Mammary epithelial cell (primary cell): ENCODE measurements at regions of chr2 and their contacts with region 1.

Region 1: GRCh38 chr2:65227425-65228262 is at the start of gene ACTR2:
- DNase-seq: peak; percentile 96
- H3K4me3 ChIP-seq: peak within 1 kb of the TSS; percentile 82 to 97 (median 96)
- H3K27ac ChIP-seq: peak within 1 kb of the TSS; percentile 82
- H3K4me1 ChIP-seq: peaks cover 29% of the 10 kb centered on the region
- H3K27me3 ChIP-seq: no peaks in the 10 kb centered on the region
- CTCF ChIP-seq: no peak
- total RNA-seq, gene ACTR2: 95.0 to 291 TPM

Region 2: DNA sequence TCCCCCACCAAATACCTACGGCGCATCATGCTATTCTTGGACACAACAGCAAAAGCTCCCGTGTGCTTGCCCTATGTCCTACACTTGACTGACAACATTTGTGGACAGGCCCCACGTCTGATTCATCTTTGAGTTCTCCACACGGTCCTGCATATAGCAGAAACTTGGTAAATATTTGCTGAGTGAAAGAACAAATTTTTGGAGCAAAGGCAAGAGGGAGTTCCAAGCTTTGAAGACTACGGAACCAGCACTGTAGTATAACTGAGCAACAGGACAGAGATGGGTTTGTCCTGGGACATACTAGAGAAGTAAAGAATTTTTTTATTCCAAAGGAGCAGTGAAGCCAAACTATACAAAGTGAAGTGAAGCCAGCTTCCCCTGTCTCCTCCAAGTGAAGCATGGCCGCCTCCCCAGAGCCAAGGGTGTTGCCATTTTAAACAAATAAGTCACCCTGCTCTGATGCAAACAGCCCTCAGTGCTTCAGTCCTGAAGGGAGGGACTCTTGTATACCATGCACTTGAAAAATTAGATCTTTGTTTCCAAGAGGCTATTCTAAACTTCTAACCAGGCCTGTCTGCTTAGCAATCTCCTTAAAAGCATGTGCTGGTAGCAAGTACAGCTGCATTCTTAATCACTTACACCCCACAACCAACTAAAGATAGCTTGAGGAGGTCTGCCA is 168.8 kb after region 1 on chr2:
- CTCF ChIA-PET with region 1: interaction called, 21 read pairs
- dilution Hi-C with region 1: no loop called
- in situ Hi-C with region 1: no loop called
- intact Hi-C with region 1: no loop called
- DNase-seq: no peak
- H3K4me3 ChIP-seq: no peak overlapping the region
- H3K27ac ChIP-seq: peak overlapping the region; percentile 35
- H3K4me1 ChIP-seq: peaks cover 31% of the 10 kb centered on the region
- H3K27me3 ChIP-seq: no peaks in the 10 kb centered on the region
- CTCF ChIP-seq: no peak